Endothelial cell of umbilical vein (primary cell): ENCODE measurements at regions of chr11 and their contacts with region 1.

Region 1: GRCh38 chr11:124769801-124770639 is 7.9 kb upstream of the ESAM start:
- DNase-seq: peak; percentile 72
- H3K4me3 ChIP-seq: no peak overlapping the region
- H3K27ac ChIP-seq: peak overlapping the region; percentile 86
- H3K4me1 ChIP-seq: peaks cover 34% of the 10 kb centered on the region
- H3K27me3 ChIP-seq: no peaks in the 10 kb centered on the region
- CTCF ChIP-seq: no peak
- POLR2A ChIP-seq: peak; percentile 41

Region 2: DNA sequence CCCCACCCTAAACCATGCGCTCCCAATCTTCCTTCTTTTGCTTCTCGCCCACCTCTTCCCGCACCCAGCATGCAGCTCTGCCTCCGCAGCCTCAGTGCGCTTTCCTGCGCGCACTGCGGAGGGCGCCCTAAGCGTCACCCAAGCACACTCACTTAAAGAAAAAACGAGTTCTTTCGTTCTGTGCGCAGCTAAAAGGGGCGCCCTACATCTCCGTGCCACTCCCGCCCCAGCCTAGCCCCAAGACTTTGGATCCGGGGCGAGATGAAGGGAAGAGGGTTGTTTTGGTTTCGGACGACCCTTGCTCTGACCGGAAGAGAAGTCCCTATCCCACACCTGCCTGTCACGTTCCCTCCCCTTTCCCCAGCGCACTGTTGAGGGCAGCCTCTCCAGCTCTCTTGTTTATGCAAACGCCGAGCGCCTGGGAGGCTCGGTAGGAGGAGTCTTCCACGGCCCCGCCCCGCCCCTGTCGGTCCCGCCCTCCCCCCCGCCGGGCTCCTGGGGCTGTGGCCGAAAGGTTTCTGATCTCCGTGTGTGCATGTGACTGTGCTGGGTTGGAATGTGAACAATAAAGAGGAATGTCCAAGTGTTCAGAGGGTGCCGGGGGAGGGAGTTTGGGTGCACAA is 23.3 kb before region 1 on chr11:
- CTCF ChIA-PET with region 1: interaction called, 301 read pairs
- POLR2A ChIA-PET with region 1: no interaction called
- dilution Hi-C with region 1: no loop called
- intact Hi-C with region 1: no loop called
- DNase-seq: peak; percentile 93
- H3K4me3 ChIP-seq: peak overlapping the region in 2 of 3 experiments; percentile 36 to 46
- H3K27ac ChIP-seq: peak overlapping the region; percentile 70
- H3K4me1 ChIP-seq: peaks cover 40% of the 10 kb centered on the region
- H3K27me3 ChIP-seq: no peaks in the 10 kb centered on the region
- CTCF ChIP-seq: peak; percentile 62 to 79
- POLR2A ChIP-seq: peak; percentile 72